Endothelial cell of umbilical vein (primary cell): ENCODE measurements at regions of chr12 and their contacts with region 1.

Region 1: GRCh38 chr12:109597795-109598427 is 24.3 kb downstream of the MVK start:
- DNase-seq: peak; percentile 78
- H3K4me3 ChIP-seq: no peak overlapping the region
- H3K27ac ChIP-seq: no peak overlapping the region
- H3K4me1 ChIP-seq: peaks cover 3% of the 10 kb centered on the region
- H3K27me3 ChIP-seq: no peaks in the 10 kb centered on the region
- CTCF ChIP-seq: peak; percentile 95 to 100
- POLR2A ChIP-seq: no peak

Region 2: DNA sequence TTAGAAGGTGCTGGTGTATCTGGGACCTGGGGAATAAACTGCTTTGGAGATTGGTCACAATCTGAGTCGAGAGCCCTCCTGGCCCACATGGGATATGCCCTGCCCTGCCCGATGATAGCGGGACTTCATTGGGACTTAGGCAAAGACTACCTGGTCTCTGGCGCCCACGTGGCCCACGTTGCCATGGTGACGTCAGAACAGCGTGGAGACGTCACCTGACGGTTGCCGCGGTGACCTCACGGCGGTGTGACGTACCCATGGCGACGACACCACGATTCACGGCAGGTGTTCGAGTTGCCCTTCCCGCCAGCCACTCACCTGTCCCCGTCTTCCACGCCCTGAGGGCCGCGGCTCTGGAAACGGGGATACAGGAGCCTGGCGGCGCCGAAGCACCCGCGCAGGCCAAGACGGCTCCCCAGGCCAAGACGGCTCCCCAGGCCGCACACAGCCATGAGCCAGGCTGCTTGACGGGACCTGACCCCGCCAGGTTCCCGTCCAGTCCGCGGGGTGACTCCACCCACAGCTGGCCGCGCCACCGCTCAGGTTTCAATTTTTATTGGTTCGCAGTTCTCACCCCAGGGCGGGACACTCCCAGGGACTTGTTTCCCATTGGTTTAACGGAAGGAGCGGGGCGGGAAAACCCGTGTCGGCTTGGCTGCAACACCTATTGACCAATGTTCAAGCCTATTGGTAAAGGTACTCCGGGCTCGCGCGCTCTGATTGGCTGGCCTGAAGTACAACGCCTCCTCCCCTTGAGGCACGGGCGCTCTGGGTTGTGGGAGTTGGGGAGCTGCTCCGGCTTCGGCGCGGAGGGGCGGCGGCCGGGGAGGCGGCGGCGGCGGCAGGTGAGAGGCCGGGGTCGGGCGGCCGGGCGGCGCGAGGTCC is 24.6 kb before region 1 on chr12 and contains the starts of genes MMAB and MVK:
- CTCF ChIA-PET with region 1: interaction called, 24 read pairs
- POLR2A ChIA-PET with region 1: interaction called, 3 read pairs
- dilution Hi-C with region 1: no loop called
- intact Hi-C with region 1: no loop called
- DNase-seq: peak; percentile 99
- H3K4me3 ChIP-seq: peak within 1 kb of the TSS; percentile 27 to 83 (median 82)
- H3K27ac ChIP-seq: peak within 1 kb of the TSS; percentile 42
- H3K4me1 ChIP-seq: peaks cover 16% of the 10 kb centered on the region
- H3K27me3 ChIP-seq: no peaks in the 10 kb centered on the region
- CTCF ChIP-seq: no peak
- POLR2A ChIP-seq: peak; percentile 73
- total RNA-seq, gene MMAB: 45.9 and 46.0 TPM in 2 replicates
- total RNA-seq, gene MVK: 40.3 and 42.6 TPM in 2 replicates

Region 3: GRCh38 chr12:109586385-109587296 is 11.3 kb before region 1 on chr12:
- CTCF ChIA-PET with region 1: interaction called, 30 read pairs
- POLR2A ChIA-PET with region 1: no interaction called
- dilution Hi-C with region 1: no loop called
- intact Hi-C with region 1: no loop called
- DNase-seq: no peak
- H3K4me3 ChIP-seq: no peak overlapping the region
- H3K27ac ChIP-seq: no peak overlapping the region
- H3K4me1 ChIP-seq: no peaks in the 10 kb centered on the region
- H3K27me3 ChIP-seq: no peaks in the 10 kb centered on the region
- CTCF ChIP-seq: no peak
- POLR2A ChIP-seq: no peak

Region 4: DNA sequence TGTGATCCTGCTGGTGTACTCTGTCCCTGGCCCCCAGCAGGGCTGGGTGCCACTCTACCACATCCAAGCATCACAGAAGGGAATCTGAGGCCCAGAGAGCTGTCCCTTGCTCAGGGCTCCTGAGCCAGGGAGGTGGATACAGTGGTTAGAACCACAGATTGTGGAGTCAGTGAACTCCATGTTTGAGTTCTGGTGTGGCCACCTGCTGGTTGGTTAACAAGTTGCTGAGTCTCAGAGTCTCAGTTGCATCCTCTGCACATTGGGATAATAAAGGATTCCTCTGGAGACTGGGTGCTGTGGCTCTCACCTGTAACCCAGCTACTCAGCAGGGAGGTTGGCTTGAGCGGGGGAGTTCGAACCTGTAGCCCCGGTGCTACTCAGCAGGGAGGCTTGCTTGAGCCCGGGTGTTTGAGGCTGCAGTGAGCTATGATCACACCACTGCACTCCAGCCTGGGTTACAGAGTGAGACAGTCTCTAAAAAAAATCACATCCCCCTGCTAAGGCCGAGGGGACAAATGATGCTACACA is 15.1 kb after region 1 on chr12:
- CTCF ChIA-PET with region 1: interaction called, 15 read pairs
- POLR2A ChIA-PET with region 1: no interaction called
- dilution Hi-C with region 1: no loop called
- intact Hi-C with region 1: no loop called
- DNase-seq: no peak
- H3K4me3 ChIP-seq: no peak overlapping the region
- H3K27ac ChIP-seq: no peak overlapping the region
- H3K4me1 ChIP-seq: no peaks in the 10 kb centered on the region
- H3K27me3 ChIP-seq: peaks cover 0 to 14% of the 10 kb centered on the region in 2 experiments
- CTCF ChIP-seq: peak; percentile 30 to 33
- POLR2A ChIP-seq: no peak

Region 5: GRCh38 chr12:109713187-109713984 is 115.5 kb after region 1 on chr12 and contains the start of gene FAM222A:
- CTCF ChIA-PET with region 1: interaction called, 4 read pairs
- POLR2A ChIA-PET with region 1: no interaction called
- dilution Hi-C with region 1: no loop called
- intact Hi-C with region 1: loop called (anchors 5 kb)
- DNase-seq: peak; percentile 98
- H3K4me3 ChIP-seq: peak within 1 kb of the TSS; percentile 33 to 58 (median 33)
- H3K27ac ChIP-seq: no peak within 1 kb of the TSS
- H3K4me1 ChIP-seq: no peaks in the 10 kb centered on the region
- H3K27me3 ChIP-seq: peaks cover 23 to 28% of the 10 kb centered on the region in 2 experiments
- CTCF ChIP-seq: no peak
- POLR2A ChIP-seq: peak; percentile 81
- total RNA-seq, gene FAM222A: 0.69 and 1.7 TPM in 2 replicates

Region 6: GRCh38 chr12:109736552-109737108 is 138.7 kb after region 1 on chr12:
- CTCF ChIA-PET with region 1: interaction called, 13 read pairs
- POLR2A ChIA-PET with region 1: no interaction called
- dilution Hi-C with region 1: no loop called
- intact Hi-C with region 1: no loop called
- DNase-seq: peak; percentile 41
- H3K4me3 ChIP-seq: no peak overlapping the region
- H3K27ac ChIP-seq: no peak overlapping the region
- H3K4me1 ChIP-seq: peaks cover 8% of the 10 kb centered on the region
- H3K27me3 ChIP-seq: no peaks in the 10 kb centered on the region
- CTCF ChIP-seq: no peak
- POLR2A ChIP-seq: no peak

Region 7: GRCh38 chr12:109828236-109828550 is 230.3 kb after region 1 on chr12:
- CTCF ChIA-PET with region 1: no interaction called
- POLR2A ChIA-PET with region 1: no interaction called
- dilution Hi-C with region 1: no loop called
- intact Hi-C with region 1: no loop called
- DNase-seq: peak; percentile 44
- H3K4me3 ChIP-seq: no peak overlapping the region
- H3K27ac ChIP-seq: peak overlapping the region; percentile 32
- H3K4me1 ChIP-seq: peaks cover 11% of the 10 kb centered on the region
- H3K27me3 ChIP-seq: no peaks in the 10 kb centered on the region
- CTCF ChIP-seq: no peak
- POLR2A ChIP-seq: no peak

Region 8: GRCh38 chr12:110093631-110094311 is 495.9 kb after region 1 on chr12:
- CTCF ChIA-PET with region 1: no interaction called
- POLR2A ChIA-PET with region 1: no interaction called
- dilution Hi-C with region 1: no loop called
- intact Hi-C with region 1: no loop called
- DNase-seq: no peak
- H3K4me3 ChIP-seq: no peak overlapping the region
- H3K27ac ChIP-seq: no peak overlapping the region
- H3K4me1 ChIP-seq: no peaks in the 10 kb centered on the region
- H3K27me3 ChIP-seq: peaks cover 16 to 19% of the 10 kb centered on the region in 2 experiments
- CTCF ChIP-seq: no peak
- POLR2A ChIP-seq: no peak